ENCODE measurements at regions of chr10 and their contacts with region 1.

Region 1: DNA sequence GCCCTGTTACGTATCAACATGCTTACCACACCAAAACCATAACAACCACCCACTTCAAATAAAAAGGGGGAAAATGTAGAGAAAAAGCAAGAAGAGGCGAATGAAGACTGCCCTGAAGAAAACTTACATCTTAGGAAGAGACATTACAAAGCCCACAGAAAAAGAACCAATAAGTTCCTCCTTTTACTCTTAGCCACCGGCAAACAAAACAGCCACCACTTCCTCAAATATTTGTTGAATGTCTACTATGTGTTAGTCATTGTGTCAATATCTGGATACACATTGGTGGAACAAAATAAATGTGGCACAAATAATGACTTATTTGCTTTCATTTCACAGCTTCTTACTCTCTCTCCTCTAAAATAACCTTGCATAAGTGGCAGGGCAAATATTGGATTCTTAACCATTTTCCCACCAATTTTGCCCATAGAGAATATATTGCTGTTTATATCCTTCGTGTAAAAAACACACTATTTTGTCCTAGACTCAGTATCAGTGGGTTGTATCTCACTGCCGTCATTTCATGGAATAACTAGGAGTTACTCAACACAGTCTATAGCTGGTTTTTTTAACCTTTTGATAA is 106.8 kb downstream of the ANK3 start:
- DNase-seq: no peak
- H3K4me3 ChIP-seq: no peak overlapping the region
- H3K27ac ChIP-seq: no peak overlapping the region
- H3K4me1 ChIP-seq: peaks cover 12% of the 10 kb centered on the region
- H3K27me3 ChIP-seq: no peaks in the 10 kb centered on the region
- CTCF ChIP-seq: no peak

Region 2: GRCh38 chr10:60296073-60296472 is 13.2 kb after region 1 on chr10:
- CTCF ChIA-PET with region 1: no interaction called
- POLR2A ChIA-PET with region 1: no interaction called
- intact Hi-C with region 1: loop called (anchors 2 kb)
- DNase-seq: no peak
- H3K4me3 ChIP-seq: no peak overlapping the region
- H3K27ac ChIP-seq: no peak overlapping the region
- H3K4me1 ChIP-seq: peaks cover 17% of the 10 kb centered on the region
- H3K27me3 ChIP-seq: no peaks in the 10 kb centered on the region
- CTCF ChIP-seq: no peak

Measured in A673 (cell line).